Activated CD4-positive, alpha-beta T cell treated with anti-CD3 and anti-CD28 coated beads, Interleukin-2, amount 10 ng/mL, durations not matched to agents 24 days and 14 days (primary cell): ENCODE measurements at regions of chr2 and their contacts with region 1.

Region 1: DNA sequence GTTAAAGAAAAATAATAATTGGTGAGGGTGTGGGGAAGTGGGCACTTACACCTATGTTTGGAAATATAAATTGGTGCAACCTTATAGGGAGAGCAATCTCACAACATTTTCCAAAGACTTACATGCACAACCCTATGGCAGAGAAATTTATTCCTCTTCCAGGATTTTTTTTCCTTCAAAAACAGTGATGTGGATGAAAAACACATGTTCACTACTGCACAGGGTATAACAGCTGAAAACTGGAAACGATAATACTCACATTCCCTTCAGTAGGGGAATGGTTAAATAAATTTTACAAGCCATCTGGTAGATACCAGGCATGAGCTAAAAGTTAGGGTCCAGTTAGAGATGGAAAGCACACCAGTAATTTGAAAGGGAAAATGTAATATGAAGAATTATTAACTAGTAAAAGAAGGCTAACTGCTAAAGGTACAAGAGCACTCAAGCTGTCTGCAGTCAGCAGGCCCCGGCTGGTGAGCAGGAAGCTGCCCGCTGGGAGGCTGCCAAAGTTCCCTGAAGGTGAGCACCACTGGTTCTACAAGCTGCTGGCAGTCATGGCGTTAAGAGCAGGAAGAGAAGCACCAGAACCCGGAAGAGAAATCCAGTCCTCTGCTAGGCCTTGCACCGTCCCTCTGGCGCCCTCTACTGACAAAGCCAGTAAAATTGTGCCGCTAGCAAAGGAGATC is 28.4 kb upstream of the CASP8 start:
- DNase-seq: peak; percentile 97
- H3K4me3 Mint-ChIP-seq: peak overlapping the region; percentile 78
- H3K27ac Mint-ChIP-seq: peak overlapping the region; percentile 91
- H3K4me1 Mint-ChIP-seq: peaks cover 47% of the 10 kb centered on the region
- H3K27me3 Mint-ChIP-seq: no peaks in the 10 kb centered on the region

Region 2: DNA sequence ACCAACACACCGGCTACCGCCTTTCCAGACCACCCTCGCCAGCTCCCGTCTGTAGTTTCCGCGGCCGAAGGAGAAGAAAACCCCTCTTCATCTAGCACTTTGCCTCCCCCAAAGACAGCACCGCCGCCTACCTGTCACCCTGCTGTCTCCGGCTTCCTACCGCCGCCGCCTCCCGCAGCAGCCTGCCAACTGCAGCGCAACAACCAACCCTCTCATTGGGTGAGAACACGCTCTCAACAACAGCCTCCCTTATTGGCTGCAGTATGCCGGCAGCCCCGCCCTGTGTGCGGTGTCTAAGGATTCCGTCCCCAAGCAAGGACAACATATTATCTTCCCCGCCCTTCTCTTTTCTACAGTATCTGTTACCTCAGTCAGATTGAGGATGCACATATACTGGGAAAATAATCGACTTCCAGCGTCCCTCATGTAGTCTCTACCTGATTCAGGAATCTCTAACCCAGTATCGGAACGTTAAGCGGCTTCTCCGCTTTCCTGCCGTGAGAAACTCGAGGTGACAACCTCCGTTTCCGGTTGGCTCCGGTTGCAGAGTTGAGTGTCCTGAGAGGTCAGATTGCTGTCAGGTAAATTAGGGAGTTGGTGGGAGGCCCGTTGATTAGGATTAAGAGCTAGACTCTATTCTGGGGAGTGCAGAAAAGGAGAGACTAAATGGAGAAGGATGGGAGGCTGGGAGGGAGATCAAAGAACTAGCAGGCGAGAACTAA is 160.3 kb before region 1 on chr2 and contains the starts of genes HYCC2 and NDUFB3:
- intact Hi-C with region 1: loop called (anchors 1 kb)
- DNase-seq: peak; percentile 98
- H3K4me3 Mint-ChIP-seq: peak within 1 kb of the TSS; percentile 92
- H3K27ac Mint-ChIP-seq: peak within 1 kb of the TSS; percentile 91
- H3K4me1 Mint-ChIP-seq: peaks cover 37% of the 10 kb centered on the region
- H3K27me3 Mint-ChIP-seq: no peaks in the 10 kb centered on the region
- total RNA-seq, gene HYCC2: 24.4 and 26.2 TPM in 2 replicates
- total RNA-seq, gene NDUFB3: 112 and 113 TPM in 2 replicates

Region 3: GRCh38 chr2:201208563-201209252 is 23.2 kb before region 1 on chr2:
- intact Hi-C with region 1: loop called (anchors 2 kb)
- DNase-seq: no peak
- H3K4me3 Mint-ChIP-seq: no peak overlapping the region
- H3K27ac Mint-ChIP-seq: no peak overlapping the region
- H3K4me1 Mint-ChIP-seq: peaks cover 21% of the 10 kb centered on the region
- H3K27me3 Mint-ChIP-seq: no peaks in the 10 kb centered on the region

Region 4: DNA sequence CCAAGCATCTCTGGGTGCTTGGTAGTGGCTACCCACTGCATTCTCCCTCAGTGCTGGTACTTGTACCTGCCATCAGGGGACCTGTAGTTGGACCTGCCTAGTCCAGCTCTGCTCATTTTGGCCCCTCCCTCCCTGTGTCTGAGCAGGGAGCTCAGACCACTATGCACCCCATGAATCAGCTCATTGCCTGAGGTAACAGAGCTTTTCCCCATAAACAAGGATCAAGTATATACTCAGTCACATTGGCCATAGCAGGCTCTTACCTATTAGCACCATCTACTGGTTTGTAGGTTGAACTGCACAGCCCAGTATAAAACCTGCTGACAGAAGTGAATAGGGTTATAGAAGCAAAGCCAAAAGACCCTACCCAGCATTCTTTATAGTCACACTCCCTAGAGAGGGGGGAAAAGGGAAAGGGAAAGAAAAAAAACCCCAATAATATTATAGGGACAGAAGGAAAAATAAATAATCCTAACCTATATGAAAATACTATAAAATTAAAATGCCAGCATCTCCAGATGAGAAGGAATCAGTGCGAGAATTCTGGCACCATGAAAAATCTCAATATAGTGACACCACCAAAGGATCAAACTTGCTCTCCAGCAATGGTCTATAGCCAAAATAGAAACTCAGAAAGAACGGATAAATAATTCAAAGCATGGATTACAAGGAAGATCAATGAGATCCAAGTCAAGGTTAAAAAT is 132.1 kb after region 1 on chr2:
- intact Hi-C with region 1: loop called (anchors 1 kb)
- DNase-seq: peak; percentile 82
- H3K4me3 Mint-ChIP-seq: no peak overlapping the region
- H3K27ac Mint-ChIP-seq: peak overlapping the region; percentile 38
- H3K4me1 Mint-ChIP-seq: peaks cover 35% of the 10 kb centered on the region
- H3K27me3 Mint-ChIP-seq: no peaks in the 10 kb centered on the region

Region 5: GRCh38 chr2:201780674-201781581 is 549.0 kb after region 1 on chr2 and contains the start of gene ALS2:
- intact Hi-C with region 1: loop called (anchors 5 kb)
- DNase-seq: peak; percentile 99
- H3K4me3 Mint-ChIP-seq: peak within 1 kb of the TSS; percentile 95
- H3K27ac Mint-ChIP-seq: peak within 1 kb of the TSS; percentile 92
- H3K4me1 Mint-ChIP-seq: peaks cover 22% of the 10 kb centered on the region
- H3K27me3 Mint-ChIP-seq: peaks cover 20% of the 10 kb centered on the region
- total RNA-seq, gene ALS2: 10.7 and 11.3 TPM in 2 replicates